ENCODE measurements at regions of chr16 and their contacts with region 1.

Region 1: DNA sequence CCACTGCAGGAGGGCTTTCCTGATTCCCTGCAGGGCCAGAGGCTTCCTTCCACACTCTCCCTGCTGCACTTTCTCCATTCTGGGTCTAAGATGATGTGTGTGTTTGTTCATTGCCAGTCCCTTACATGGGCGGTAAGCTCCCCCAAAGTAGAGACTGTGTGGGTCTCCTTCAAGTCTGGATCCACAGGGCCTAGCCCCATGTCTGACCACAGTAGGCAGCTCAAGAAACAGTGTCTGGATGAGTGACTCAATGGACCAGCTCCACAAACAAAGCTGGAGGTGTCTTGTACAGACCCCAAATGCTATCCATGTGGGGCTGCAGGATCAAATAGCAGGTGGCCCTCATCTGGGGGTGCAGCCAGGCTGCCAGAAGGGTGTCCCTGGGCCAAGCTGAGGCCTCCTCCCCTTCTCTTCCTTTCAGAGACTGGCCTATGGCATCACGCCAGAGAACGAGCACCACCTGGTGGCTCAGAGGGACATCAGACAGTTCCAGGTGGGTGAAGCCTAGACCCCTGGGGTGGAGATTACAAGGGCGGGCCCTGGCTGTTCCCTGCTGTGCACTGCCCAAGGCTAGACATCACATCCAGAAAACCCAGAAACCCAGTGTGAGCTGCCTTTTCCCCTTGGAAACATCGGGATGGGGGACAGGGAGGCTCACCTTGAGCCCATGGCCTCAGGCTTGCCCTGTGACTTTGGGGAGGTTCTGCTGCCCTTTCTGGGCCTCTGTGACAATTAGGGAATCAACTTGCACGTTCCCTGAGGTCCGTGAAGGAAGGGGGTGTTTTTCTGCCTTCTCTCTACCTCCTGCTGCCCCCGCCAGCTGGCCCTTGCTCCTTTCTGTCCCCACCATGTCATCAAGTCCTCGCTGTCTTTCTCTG is 45.9 kb downstream of the SLC6A2 start:
- DNase-seq: no peak
- ATAC-seq: peak; percentile 71
- H3K4me3 ChIP-seq: no peak overlapping the region
- H3K27ac ChIP-seq: no peak overlapping the region
- H3K4me1 ChIP-seq: no peaks in the 10 kb centered on the region; the same call in 1 of the 2 replicates
- H3K27me3 ChIP-seq: no peaks in the 10 kb centered on the region
- CTCF ChIP-seq: peak; percentile 70

Region 2: DNA sequence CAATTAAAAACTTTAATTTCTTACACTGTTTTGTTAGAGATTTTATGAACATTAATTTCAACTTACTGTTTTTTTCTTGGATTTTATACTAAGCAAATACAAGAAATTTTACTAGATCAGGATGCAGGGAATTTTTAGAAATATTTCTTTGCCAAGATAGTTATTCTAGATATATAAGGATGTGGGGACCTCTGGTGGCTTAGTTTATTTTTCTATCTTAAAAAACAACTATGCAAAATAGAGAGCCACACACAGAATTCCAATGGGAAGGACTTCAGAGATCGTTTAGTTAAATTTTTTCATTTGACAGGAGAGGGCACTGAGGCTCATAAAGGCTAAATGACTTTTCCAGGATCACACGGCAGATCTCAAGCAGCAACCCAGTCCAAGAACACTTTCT is 158.2 kb before region 1 on chr16:
- CTCF ChIA-PET with region 1: no interaction called
- POLR2A ChIA-PET with region 1: no interaction called
- in situ Hi-C with region 1: no loop called
- intact Hi-C with region 1: loop called (anchors 10 kb)
- DNase-seq: no peak
- ATAC-seq: no peak
- H3K4me3 ChIP-seq: no peak overlapping the region
- H3K27ac ChIP-seq: no peak overlapping the region
- H3K4me1 ChIP-seq: peaks cover 3% of the 10 kb centered on the region; the same call in 1 of the 2 replicates
- H3K27me3 ChIP-seq: no peaks in the 10 kb centered on the region
- CTCF ChIP-seq: peak; percentile 29; the same call in 1 of the 2 replicates

Measured in Panc1 (cell line).